ENCODE measurements at regions of chr1 and their contacts with region 1.

Region 1: GRCh38 chr1:121458291-121459048 is 273.7 kb downstream of the SRGAP2C start:
- DNase-seq: no peak
- H3K4me3 Mint-ChIP-seq: peak overlapping the region; percentile 16
- H3K27ac Mint-ChIP-seq: peak overlapping the region; percentile 38
- H3K4me1 Mint-ChIP-seq: peaks cover 41% of the 10 kb centered on the region
- H3K27me3 Mint-ChIP-seq: peaks cover 6% of the 10 kb centered on the region

Region 2: DNA sequence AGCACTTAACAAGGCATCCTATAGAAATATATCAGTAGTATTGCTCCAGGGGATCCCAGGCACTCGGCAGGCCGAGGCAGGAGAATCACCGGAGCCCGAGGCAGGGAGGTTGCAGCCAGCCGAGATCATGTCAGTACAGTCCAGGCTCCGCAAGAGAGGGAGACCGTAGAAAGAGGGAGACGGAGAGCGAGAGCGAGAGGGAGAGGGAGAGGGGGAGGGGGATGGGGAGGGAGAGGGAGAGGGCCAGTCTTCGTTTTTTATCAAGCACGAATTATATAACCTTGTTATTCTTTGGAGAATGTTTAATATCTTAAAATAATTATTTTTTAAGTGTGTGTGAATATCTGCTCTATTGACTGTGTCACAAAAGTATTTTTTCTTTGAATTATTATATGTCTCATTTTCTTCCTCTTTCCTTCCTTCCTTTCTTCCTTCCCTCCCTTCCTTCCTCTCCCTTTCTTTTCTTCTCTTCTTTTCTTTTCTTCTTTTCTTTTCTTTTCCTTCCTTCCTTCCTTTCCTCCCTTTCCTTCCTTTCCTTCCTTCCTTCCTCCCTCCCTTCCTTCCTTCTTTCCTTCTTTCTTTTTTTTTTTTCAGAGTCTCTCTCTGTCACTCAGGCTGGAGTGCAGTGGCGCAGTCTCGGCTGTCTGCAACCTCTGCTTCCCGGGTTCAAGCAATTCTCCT is 40.0 kb before region 1 on chr1:
- intact Hi-C with region 1: no loop called
- DNase-seq: no peak
- H3K4me3 Mint-ChIP-seq: no peak overlapping the region
- H3K27ac Mint-ChIP-seq: no peak overlapping the region
- H3K4me1 Mint-ChIP-seq: peaks cover 20% of the 10 kb centered on the region
- H3K27me3 Mint-ChIP-seq: peaks cover 4% of the 10 kb centered on the region

Region 3: DNA sequence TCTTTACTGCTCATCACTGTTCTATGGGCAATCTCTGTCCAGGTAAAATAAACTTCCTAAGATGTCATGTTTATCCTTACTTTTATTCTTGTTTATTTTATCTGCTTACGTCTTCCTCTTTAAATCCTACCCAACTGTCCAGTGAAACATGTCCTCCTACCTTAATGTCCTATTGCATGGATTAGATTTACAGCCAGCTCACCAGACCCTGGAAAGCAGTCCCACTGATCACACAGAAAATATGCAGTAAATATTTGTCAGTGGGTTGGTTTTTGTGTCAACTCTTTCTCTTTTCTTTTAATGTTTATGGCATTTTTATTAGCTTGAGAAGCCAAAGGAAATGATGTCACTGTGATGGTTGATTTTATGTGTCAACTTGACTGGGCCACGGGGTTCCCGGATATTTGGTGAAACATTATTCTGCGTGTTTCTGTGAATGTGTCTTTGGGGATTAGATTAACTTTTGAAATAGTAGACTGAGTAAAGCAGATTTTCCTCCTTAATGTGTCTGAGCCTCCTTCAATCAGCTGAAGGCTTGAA is 15.4 kb before region 1 on chr1:
- intact Hi-C with region 1: loop called (anchors 2 kb)
- DNase-seq: no peak
- H3K4me3 Mint-ChIP-seq: no peak overlapping the region
- H3K27ac Mint-ChIP-seq: no peak overlapping the region
- H3K4me1 Mint-ChIP-seq: peaks cover 32% of the 10 kb centered on the region
- H3K27me3 Mint-ChIP-seq: peaks cover 6% of the 10 kb centered on the region

Region 4: GRCh38 chr1:121471523-121471922 is 13.1 kb after region 1 on chr1:
- intact Hi-C with region 1: loop called (anchors 2 kb)
- DNase-seq: no peak
- H3K4me3 Mint-ChIP-seq: peak overlapping the region; percentile 23
- H3K27ac Mint-ChIP-seq: peak overlapping the region; percentile 62
- H3K4me1 Mint-ChIP-seq: peaks cover 48% of the 10 kb centered on the region
- H3K27me3 Mint-ChIP-seq: no peaks in the 10 kb centered on the region

Region 5: GRCh38 chr1:121519042-121519755 is 60.7 kb after region 1 on chr1:
- intact Hi-C with region 1: loop called (anchors 2 kb)
- DNase-seq: peak; percentile 83
- H3K4me3 Mint-ChIP-seq: peak overlapping the region; percentile 96
- H3K27ac Mint-ChIP-seq: peak overlapping the region; percentile 96
- H3K4me1 Mint-ChIP-seq: peaks cover 74% of the 10 kb centered on the region
- H3K27me3 Mint-ChIP-seq: no peaks in the 10 kb centered on the region

Region 6: DNA sequence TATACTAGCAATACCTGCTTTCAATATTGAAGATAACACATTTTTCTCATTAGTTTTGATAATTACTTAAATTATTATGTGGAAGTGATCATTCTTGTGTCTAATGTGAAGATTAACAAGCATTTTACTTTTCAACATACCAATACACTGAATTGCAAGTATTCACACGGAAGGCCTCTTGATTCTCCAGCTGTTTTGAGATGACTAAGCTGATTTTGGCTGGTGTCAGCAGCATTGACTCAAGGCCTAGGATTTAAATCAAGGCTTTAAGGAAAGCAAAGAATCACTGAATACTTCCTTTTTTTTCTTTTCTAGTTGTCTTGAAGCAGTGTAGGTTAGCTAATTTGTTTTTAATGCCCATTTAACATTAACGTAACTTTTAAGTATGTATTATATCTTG is 100.0 kb after region 1 on chr1:
- intact Hi-C with region 1: loop called (anchors 10 kb)
- DNase-seq: no peak
- H3K4me3 Mint-ChIP-seq: no peak overlapping the region
- H3K27ac Mint-ChIP-seq: no peak overlapping the region
- H3K4me1 Mint-ChIP-seq: peaks cover 7% of the 10 kb centered on the region
- H3K27me3 Mint-ChIP-seq: no peaks in the 10 kb centered on the region